Activated B cell treated with CpG ODN at 0.5 μM for 24 hours (primary cell): ENCODE measurements at regions of chr7 and their contacts with region 1.

Region 1: GRCh38 chr7:139075031-139075652 is 34.4 kb downstream of the ZC3HAV1 start:
- DNase-seq: no peak
- ATAC-seq: peak; percentile 87
- H3K4me3 Mint-ChIP-seq: no peak overlapping the region
- H3K27ac Mint-ChIP-seq: peak overlapping the region; percentile 60
- H3K4me1 Mint-ChIP-seq: peaks cover 17% of the 10 kb centered on the region
- H3K27me3 Mint-ChIP-seq: no peaks in the 10 kb centered on the region
- CTCF ChIP-seq: no peak

Region 2: DNA sequence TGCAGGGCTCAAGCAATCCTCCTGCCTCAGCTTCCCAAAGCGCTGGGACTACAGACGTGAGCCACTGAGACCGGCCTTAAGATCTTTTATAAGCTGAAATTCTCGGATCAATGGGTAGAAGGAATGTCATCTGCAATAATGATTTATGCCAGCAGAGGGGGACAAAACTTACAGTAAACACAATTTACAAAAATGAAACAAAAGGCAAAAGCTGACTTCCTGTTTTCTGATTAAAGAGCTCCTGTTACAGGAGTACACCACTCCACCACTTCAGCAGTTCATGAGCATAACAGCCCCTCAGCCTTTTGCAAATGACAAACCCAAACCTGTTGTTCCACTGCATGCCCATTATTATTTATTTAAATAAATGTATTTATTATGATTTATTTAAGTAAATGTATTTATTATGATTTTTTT is 188.6 kb before region 1 on chr7:
- CTCF ChIA-PET with region 1: no interaction called
- POLR2A ChIA-PET with region 1: interaction called, 4 read pairs
- intact Hi-C with region 1: loop called (anchors 1 kb)
- DNase-seq: no peak
- ATAC-seq: peak; percentile 60
- H3K4me3 Mint-ChIP-seq: no peak overlapping the region
- H3K27ac Mint-ChIP-seq: no peak overlapping the region
- H3K4me1 Mint-ChIP-seq: peaks cover 2% of the 10 kb centered on the region
- H3K27me3 Mint-ChIP-seq: peaks cover 3% of the 10 kb centered on the region
- CTCF ChIP-seq: no peak

Region 3: DNA sequence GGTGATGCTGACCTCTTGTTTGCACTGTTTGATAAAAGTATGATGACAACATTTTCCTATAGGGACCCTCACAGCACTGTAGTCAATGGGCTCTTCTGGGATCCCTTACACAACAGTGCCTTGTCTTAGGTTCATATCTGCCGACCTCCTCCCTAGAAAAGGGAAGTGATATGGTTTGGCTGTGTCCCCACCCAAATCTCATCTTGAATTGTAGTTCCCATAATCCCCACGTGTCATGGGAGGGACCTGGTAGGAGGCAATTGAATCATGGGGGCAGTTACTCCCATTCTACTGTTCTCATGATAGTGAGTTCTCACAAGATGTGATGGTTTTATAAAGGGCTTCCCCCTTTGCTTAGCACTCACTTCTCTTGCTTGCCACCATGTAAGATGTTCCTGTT is 11.3 kb after region 1 on chr7:
- CTCF ChIA-PET with region 1: interaction called, 13 read pairs
- POLR2A ChIA-PET with region 1: no interaction called
- intact Hi-C with region 1: no loop called
- DNase-seq: no peak
- ATAC-seq: no peak
- H3K4me3 Mint-ChIP-seq: no peak overlapping the region
- H3K27ac Mint-ChIP-seq: peak overlapping the region; percentile 3
- H3K4me1 Mint-ChIP-seq: peaks cover 29% of the 10 kb centered on the region
- H3K27me3 Mint-ChIP-seq: no peaks in the 10 kb centered on the region
- CTCF ChIP-seq: no peak

Region 4: GRCh38 chr7:139104091-139104450 is 28.9 kb after region 1 on chr7:
- CTCF ChIA-PET with region 1: interaction called, 13 read pairs
- POLR2A ChIA-PET with region 1: no interaction called
- intact Hi-C with region 1: loop called (anchors 1 kb)
- DNase-seq: no peak
- ATAC-seq: no peak
- H3K4me3 Mint-ChIP-seq: peak overlapping the region; percentile 82
- H3K27ac Mint-ChIP-seq: peak overlapping the region; percentile 87
- H3K4me1 Mint-ChIP-seq: peaks cover 67% of the 10 kb centered on the region
- H3K27me3 Mint-ChIP-seq: no peaks in the 10 kb centered on the region
- CTCF ChIP-seq: no peak

Region 5: GRCh38 chr7:139127648-139128047 is 52.5 kb after region 1 on chr7:
- CTCF ChIA-PET with region 1: interaction called, 15 read pairs
- POLR2A ChIA-PET with region 1: interaction called, 3 read pairs
- intact Hi-C with region 1: loop called (anchors 1 kb)
- DNase-seq: no peak
- ATAC-seq: peak; percentile 49
- H3K4me3 Mint-ChIP-seq: no peak overlapping the region
- H3K27ac Mint-ChIP-seq: no peak overlapping the region
- H3K4me1 Mint-ChIP-seq: peaks cover 35% of the 10 kb centered on the region
- H3K27me3 Mint-ChIP-seq: no peaks in the 10 kb centered on the region
- CTCF ChIP-seq: no peak